ENCODE measurements at regions of chr12 and their contacts with region 1.

Region 1: GRCh38 chr12:47882781-47883546 is 21.8 kb downstream of the VDR start:
- DNase-seq: peak; percentile 67
- H3K4me3 Mint-ChIP-seq: peak overlapping the region; percentile 79
- H3K27ac Mint-ChIP-seq: peak overlapping the region; percentile 96
- H3K4me1 Mint-ChIP-seq: peaks cover 70% of the 10 kb centered on the region
- H3K27me3 Mint-ChIP-seq: no peaks in the 10 kb centered on the region

Region 2: GRCh38 chr12:47634127-47634526 is 248.8 kb before region 1 on chr12:
- CTCF ChIA-PET with region 1: no interaction called
- DNase-seq: no peak
- H3K4me3 Mint-ChIP-seq: no peak overlapping the region
- H3K27ac Mint-ChIP-seq: no peak overlapping the region
- H3K4me1 Mint-ChIP-seq: no peaks in the 10 kb centered on the region
- H3K27me3 Mint-ChIP-seq: no peaks in the 10 kb centered on the region

Region 3: GRCh38 chr12:47850153-47851084 is 32.5 kb before region 1 on chr12:
- CTCF ChIA-PET with region 1: interaction called, 10 read pairs
- DNase-seq: no peak
- H3K4me3 Mint-ChIP-seq: no peak overlapping the region
- H3K27ac Mint-ChIP-seq: no peak overlapping the region
- H3K4me1 Mint-ChIP-seq: no peaks in the 10 kb centered on the region
- H3K27me3 Mint-ChIP-seq: no peaks in the 10 kb centered on the region

Region 4: GRCh38 chr12:47867495-47867941 is 15.4 kb before region 1 on chr12:
- CTCF ChIA-PET with region 1: interaction called, 15 read pairs
- DNase-seq: peak; percentile 40
- H3K4me3 Mint-ChIP-seq: no peak overlapping the region
- H3K27ac Mint-ChIP-seq: peak overlapping the region; percentile 74
- H3K4me1 Mint-ChIP-seq: peaks cover 42% of the 10 kb centered on the region
- H3K27me3 Mint-ChIP-seq: no peaks in the 10 kb centered on the region